AG04450 (cell line): ENCODE measurements at regions of chr9 and their contacts with region 1.

Region 1: GRCh38 chr9:16871356-16872151 is 1.1 kb upstream of the BNC2 start:
- DNase-seq: no peak
- H3K4me3 ChIP-seq: peak overlapping the region; percentile 80
- H3K27ac ChIP-seq: peak overlapping the region; percentile 92
- H3K27me3 ChIP-seq: no peaks in the 10 kb centered on the region
- CTCF ChIP-seq: no peak

Region 2: DNA sequence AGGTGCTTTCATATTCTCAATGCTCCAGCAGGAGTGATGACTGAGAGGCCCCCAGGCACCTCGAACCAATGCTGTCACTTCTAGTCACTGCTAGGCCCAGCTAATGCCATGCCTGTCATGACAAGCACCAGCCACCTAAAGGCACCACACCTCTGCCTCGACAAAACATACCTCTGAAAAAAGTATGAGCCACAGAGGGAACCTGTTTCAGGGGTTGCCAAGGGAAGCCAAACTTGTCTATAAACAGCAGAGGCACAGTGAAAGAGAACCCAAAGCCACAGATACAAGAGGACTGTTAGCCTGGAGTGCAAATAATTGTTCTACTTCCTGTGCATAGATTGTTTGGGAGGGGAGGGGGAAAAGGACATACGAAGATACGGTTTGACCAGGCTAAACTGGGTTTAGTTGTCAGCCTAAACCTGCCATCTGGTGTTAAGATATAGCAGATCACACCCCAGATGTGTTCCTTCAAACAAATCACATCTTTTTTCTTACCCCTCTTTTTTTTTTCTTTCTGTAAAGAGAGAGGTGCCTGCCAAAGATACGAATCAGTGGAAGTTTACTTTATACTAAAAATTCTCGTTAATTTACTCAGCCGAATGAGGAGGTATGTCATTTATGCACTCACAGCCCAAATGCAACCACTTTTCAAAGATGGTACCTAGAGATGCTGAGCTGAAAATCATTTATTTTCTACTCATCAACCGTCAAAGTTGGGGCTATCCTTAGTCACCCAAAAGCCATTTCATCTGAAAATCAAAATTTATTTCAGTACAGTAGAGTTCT is 46.8 kb before region 1 on chr9:
- CTCF ChIA-PET with region 1: interaction called, 3 read pairs
- POLR2A ChIA-PET with region 1: interaction called, 22 read pairs
- DNase-seq: peak; percentile 70
- H3K4me3 ChIP-seq: peak overlapping the region; percentile 15; the same call in 1 of the 2 replicates
- H3K27ac ChIP-seq: peak overlapping the region; percentile 92
- H3K27me3 ChIP-seq: no peaks in the 10 kb centered on the region
- CTCF ChIP-seq: peak; percentile 5; the same call in 1 of the 2 replicates